Heart right ventricle (tissue), 16 donors: ENCODE measurements at regions of chr3 and their contacts with region 1.

Region 1: GRCh38 chr3:14301558-14301957 is 100.8 kb upstream of the SLC6A6 start:
- DNase-seq: no peak
- ATAC-seq: no peak
- H3K4me3 ChIP-seq: no peak overlapping the region
- H3K27ac ChIP-seq: no peak overlapping the region
- H3K4me1 ChIP-seq: peaks cover 4 to 39% (median 14%) of the 10 kb centered on the region in 9 donors
- H3K27me3 ChIP-seq: peaks cover 0 to 63% (median 23%) of the 10 kb centered on the region in 7 donors
- CTCF ChIP-seq: no peak

Region 2: GRCh38 chr3:14371573-14372474 is 70.3 kb after region 1 on chr3:
- intact Hi-C with region 1: loop called in 2 of 10 experiments (anchors 5 to 10 kb)
- DNase-seq: peak; percentile 84 to 85
- ATAC-seq: peak; percentile 69 to 89 (median 86)
- H3K4me3 ChIP-seq: no peak overlapping the region
- H3K27ac ChIP-seq: peak overlapping the region; percentile 15 to 94 (median 59)
- H3K4me1 ChIP-seq: peaks cover 11 to 74% (median 41%) of the 10 kb centered on the region in 9 donors
- H3K27me3 ChIP-seq: peaks cover 0 to 39% (median 26%) of the 10 kb centered on the region in 7 donors
- CTCF ChIP-seq: peak in 4 of 9 donors; percentile 4 to 20 (median 14)

Region 3: GRCh38 chr3:14598143-14598569 is 296.6 kb after region 1 on chr3:
- intact Hi-C with region 1: no loop called
- DNase-seq: no peak
- ATAC-seq: no peak
- H3K4me3 ChIP-seq: no peak overlapping the region
- H3K27ac ChIP-seq: no peak overlapping the region
- H3K4me1 ChIP-seq: peaks cover 0 to 8% (median 4%) of the 10 kb centered on the region in 9 donors
- H3K27me3 ChIP-seq: peaks cover 6 to 69% (median 53%) of the 10 kb centered on the region in 7 donors
- CTCF ChIP-seq: no peak